ENCODE measurements at regions of chr7 and their contacts with region 1.

Region 1: DNA sequence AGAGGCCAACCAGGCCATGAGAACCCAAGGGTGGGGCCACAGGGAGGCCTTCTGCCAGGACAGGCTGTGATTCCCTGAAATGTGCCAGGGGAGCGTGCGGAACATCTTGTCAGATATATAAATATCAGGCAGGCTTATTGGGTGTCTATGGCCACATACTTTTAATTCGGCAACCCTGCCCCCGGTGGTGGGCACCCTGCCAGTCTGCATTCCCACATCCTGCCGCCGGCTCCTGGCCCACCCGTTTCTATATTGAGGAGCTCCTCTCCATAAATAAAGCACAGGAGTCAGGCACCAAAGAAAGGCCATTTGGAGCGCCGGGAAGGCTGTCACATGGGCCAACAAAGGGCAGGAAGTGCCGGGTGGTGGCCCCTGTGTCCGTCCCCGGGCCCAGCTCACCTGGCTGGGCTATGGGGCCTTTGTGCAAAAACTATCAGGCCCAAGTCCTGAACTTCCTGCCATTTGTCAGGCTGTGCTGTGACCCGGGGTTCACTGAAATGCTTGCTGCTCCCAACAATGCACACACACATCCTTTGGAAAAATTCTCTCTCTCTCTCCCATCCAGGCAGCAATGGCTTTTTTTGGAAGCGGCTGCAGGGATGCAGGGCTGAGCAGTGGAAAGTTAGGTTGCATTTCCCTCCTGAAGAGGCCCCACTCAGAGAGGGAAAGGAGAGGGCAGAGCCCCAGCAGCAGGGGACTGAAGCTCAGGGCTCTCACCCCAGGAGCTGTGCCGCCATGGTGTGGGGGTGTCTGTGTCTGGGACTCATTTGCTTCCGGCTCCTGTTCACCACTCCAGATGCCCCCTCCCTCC is 25.0 kb upstream of the PODXL start:
- DNase-seq: peak; percentile 86 to 87
- ATAC-seq: peak; percentile 84 to 85
- H3K4me3 ChIP-seq: peak overlapping the region in 3 of 4 donors; percentile 12 to 18 (median 14)
- H3K27ac ChIP-seq: peak overlapping the region; percentile 72 to 86 (median 78)
- H3K4me1 ChIP-seq: peaks cover 23 to 32% of the 10 kb centered on the region in 2 donors
- H3K27me3 ChIP-seq: no peaks in the 10 kb centered on the region
- CTCF ChIP-seq: peak in 3 of 5 experiments; percentile 38 to 47 (median 45)
- POLR2A ChIP-seq: no peak

Region 2: DNA sequence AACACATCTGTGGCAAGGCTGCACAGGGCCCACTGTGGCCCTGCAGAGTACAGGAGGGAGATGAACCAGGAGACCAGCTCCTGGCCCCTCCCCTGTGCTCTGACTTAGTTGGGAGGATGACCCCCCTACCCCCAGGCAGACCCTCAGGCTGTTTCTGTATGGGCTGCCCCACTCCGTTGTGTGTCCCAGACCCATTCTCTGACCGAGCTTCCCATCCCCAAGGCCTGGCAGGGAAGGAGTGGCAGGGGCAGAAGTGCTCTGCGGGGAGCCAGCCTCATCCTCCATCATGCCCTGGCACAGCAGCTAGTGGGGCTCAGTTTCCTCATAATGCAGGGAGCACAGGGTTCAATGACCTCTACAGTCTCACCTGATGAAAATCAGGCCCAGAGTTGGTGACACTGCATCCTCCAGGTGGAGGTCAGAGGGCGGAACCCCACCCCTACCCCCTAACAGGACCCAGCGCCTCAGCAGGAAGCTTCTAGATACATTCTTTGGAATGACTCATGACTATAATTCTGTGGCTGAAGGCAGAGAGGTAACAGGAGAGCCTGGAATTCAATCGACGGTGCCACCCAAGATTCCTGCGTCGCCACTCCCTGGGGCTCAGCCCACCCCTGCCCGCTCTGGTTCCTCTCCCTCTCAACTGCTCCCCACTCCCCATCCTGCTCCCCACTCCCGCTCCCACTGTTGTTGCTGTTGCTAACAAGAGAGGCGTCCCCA is 43.2 kb before region 1 on chr7:
- in situ Hi-C with region 1: no loop called
- intact Hi-C with region 1: loop called (anchors 1 kb)
- DNase-seq: peak in 1 of 2 donors; percentile 45
- ATAC-seq: peak; percentile 66 to 82
- H3K4me3 ChIP-seq: no peak overlapping the region
- H3K27ac ChIP-seq: peak overlapping the region; percentile 76 to 82 (median 79)
- H3K4me1 ChIP-seq: peaks cover 41 to 61% of the 10 kb centered on the region in 2 donors
- H3K27me3 ChIP-seq: no peaks in the 10 kb centered on the region
- CTCF ChIP-seq: no peak
- POLR2A ChIP-seq: no peak

Region 3: GRCh38 chr7:132065193-132065988 is 483.9 kb after region 1 on chr7:
- in situ Hi-C with region 1: no loop called
- intact Hi-C with region 1: loop called (anchors 10 kb)
- DNase-seq: peak; percentile 75 to 83
- ATAC-seq: peak; percentile 90 to 95
- H3K4me3 ChIP-seq: no peak overlapping the region
- H3K27ac ChIP-seq: peak overlapping the region; percentile 79 to 95 (median 88)
- H3K4me1 ChIP-seq: peaks cover 51 to 53% of the 10 kb centered on the region in 2 donors
- H3K27me3 ChIP-seq: no peaks in the 10 kb centered on the region
- CTCF ChIP-seq: no peak
- POLR2A ChIP-seq: no peak

Measured in gastrocnemius medialis (tissue), 4 donors.